CD8-positive, alpha-beta T cell (primary cell): ENCODE measurements at regions of chr12 and their contacts with region 1.

Region 1: GRCh38 chr12:116277393-116278278 is at the start of gene MED13L:
- DNase-seq: peak; percentile 78 to 95 (median 89)
- ATAC-seq: peak; percentile 80
- H3K4me3 ChIP-seq: peak within 1 kb of the TSS; percentile 83 to 85
- H3K4me3 Mint-ChIP-seq: peak within 1 kb of the TSS; percentile 93
- H3K27ac ChIP-seq: peak within 1 kb of the TSS; percentile 29 to 54
- H3K27ac Mint-ChIP-seq: peak within 1 kb of the TSS; percentile 91
- H3K4me1 ChIP-seq: peaks cover 34% of the 10 kb centered on the region
- H3K4me1 Mint-ChIP-seq: peaks cover 38% of the 10 kb centered on the region
- H3K27me3 ChIP-seq: no peaks in the 10 kb centered on the region
- H3K27me3 Mint-ChIP-seq: no peaks in the 10 kb centered on the region
- CTCF ChIP-seq: no peak
- total RNA-seq, gene MED13L: 157 to 159 TPM

Region 2: GRCh38 chr12:115172521-115172920 is 1105.1 kb before region 1 on chr12:
- CTCF ChIA-PET with region 1: no interaction called
- POLR2A ChIA-PET with region 1: no interaction called
- intact Hi-C with region 1: no loop called
- DNase-seq: no peak
- ATAC-seq: no peak
- H3K4me3 ChIP-seq: no peak overlapping the region
- H3K4me3 Mint-ChIP-seq: no peak overlapping the region
- H3K27ac ChIP-seq: no peak overlapping the region
- H3K27ac Mint-ChIP-seq: no peak overlapping the region
- H3K4me1 ChIP-seq: no peaks in the 10 kb centered on the region
- H3K4me1 Mint-ChIP-seq: no peaks in the 10 kb centered on the region
- H3K27me3 ChIP-seq: no peaks in the 10 kb centered on the region
- H3K27me3 Mint-ChIP-seq: peaks cover 2% of the 10 kb centered on the region
- CTCF ChIP-seq: no peak

Region 3: GRCh38 chr12:116236148-116236731 is 41.4 kb before region 1 on chr12:
- CTCF ChIA-PET with region 1: interaction called, 5 read pairs
- POLR2A ChIA-PET with region 1: interaction called, 4 read pairs
- intact Hi-C with region 1: loop called (anchors 1 to 5 kb)
- DNase-seq: peak in 8 of 9 experiments; percentile 26 to 78 (median 54)
- ATAC-seq: peak; percentile 73
- H3K4me3 ChIP-seq: no peak overlapping the region
- H3K4me3 Mint-ChIP-seq: peak overlapping the region; percentile 1
- H3K27ac ChIP-seq: peak overlapping the region in 1 of 2 experiments; percentile 18
- H3K27ac Mint-ChIP-seq: peak overlapping the region; percentile 83
- H3K4me1 ChIP-seq: peaks cover 10% of the 10 kb centered on the region
- H3K4me1 Mint-ChIP-seq: peaks cover 46% of the 10 kb centered on the region
- H3K27me3 ChIP-seq: no peaks in the 10 kb centered on the region
- H3K27me3 Mint-ChIP-seq: no peaks in the 10 kb centered on the region
- CTCF ChIP-seq: peak; percentile 52

Region 4: DNA sequence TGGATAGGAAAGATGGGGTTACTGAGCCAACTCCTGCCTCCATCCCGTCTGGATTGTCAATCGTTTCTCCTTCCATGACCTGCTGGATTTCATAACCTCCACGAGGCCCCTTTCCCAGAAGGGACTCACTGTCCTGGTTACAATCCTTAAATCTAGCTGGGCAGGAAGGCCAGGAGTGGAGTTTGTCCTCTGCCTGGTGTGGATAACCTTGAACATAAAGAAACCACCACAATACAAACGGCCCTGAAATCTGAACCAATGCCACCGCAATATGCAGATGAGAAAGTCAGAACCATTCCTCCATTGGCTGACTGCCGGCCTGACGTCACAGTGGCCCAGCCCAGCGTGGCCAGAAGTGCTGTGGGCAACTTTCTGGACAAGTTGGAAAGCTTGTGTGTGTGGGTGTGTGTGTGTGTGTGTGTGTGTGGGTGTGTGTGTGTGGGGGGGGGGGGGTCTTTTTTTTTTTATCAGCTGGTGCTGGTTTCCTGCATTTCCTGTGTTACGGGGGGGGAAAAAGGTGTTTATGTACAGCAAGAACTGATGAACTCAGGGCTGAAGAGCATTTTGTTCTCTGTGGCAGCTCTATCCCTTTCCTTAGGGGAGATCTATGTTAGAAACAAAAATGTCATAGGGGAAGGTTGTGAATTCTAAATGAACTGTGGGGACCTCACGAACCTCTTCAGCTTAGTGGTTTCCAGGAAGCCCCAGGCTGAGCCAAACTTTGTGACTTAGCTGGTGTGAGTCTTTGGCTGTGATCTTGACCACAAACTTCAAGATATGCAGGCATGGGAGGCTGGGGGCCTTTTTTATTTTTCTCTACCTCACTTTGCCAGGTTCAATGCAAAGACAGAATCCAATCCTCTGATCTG is 81.5 kb after region 1 on chr12:
- CTCF ChIA-PET with region 1: no interaction called
- POLR2A ChIA-PET with region 1: no interaction called
- intact Hi-C with region 1: loop called (anchors 1 to 5 kb)
- DNase-seq: peak; percentile 28 to 89 (median 71)
- ATAC-seq: peak; percentile 92
- H3K4me3 ChIP-seq: peak overlapping the region; percentile 10 to 41
- H3K4me3 Mint-ChIP-seq: peak overlapping the region; percentile 73
- H3K27ac ChIP-seq: peak overlapping the region in 1 of 2 experiments; percentile 57
- H3K27ac Mint-ChIP-seq: peak overlapping the region; percentile 84
- H3K4me1 ChIP-seq: peaks cover 26% of the 10 kb centered on the region
- H3K4me1 Mint-ChIP-seq: peaks cover 31% of the 10 kb centered on the region
- H3K27me3 ChIP-seq: no peaks in the 10 kb centered on the region
- H3K27me3 Mint-ChIP-seq: no peaks in the 10 kb centered on the region
- CTCF ChIP-seq: no peak

Region 5: DNA sequence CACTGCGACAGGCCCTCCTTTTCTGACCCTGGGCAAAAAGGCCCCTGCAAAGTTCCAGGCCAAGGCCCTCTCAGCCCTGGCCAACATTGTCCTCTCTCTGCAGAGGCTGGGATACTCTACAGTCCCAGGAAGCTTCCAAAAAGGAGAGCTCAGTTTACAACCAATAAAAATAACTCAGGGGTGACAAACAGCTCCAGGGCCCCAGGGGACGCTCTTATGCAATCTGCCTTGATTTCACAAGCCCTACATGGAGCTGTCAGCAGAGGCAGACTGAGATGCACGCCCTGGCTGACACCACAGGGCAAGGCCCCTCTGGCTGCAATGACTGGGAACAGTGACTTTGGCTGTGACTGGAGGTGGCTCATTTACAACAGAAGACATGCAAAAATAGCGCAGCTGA is 128.9 kb after region 1 on chr12:
- CTCF ChIA-PET with region 1: no interaction called
- POLR2A ChIA-PET with region 1: no interaction called
- intact Hi-C with region 1: no loop called
- DNase-seq: peak in 1 of 9 experiments; percentile 27
- ATAC-seq: no peak
- H3K4me3 ChIP-seq: no peak overlapping the region
- H3K4me3 Mint-ChIP-seq: no peak overlapping the region
- H3K27ac ChIP-seq: no peak overlapping the region
- H3K27ac Mint-ChIP-seq: no peak overlapping the region
- H3K4me1 ChIP-seq: no peaks in the 10 kb centered on the region
- H3K4me1 Mint-ChIP-seq: peaks cover 4% of the 10 kb centered on the region
- H3K27me3 ChIP-seq: no peaks in the 10 kb centered on the region
- H3K27me3 Mint-ChIP-seq: no peaks in the 10 kb centered on the region
- CTCF ChIP-seq: no peak

Region 6: GRCh38 chr12:116559162-116559935 is 281.7 kb after region 1 on chr12 and contains the start of gene MAP1LC3B2:
- CTCF ChIA-PET with region 1: no interaction called
- POLR2A ChIA-PET with region 1: interaction called, 7 read pairs
- intact Hi-C with region 1: loop called in 1 of 2 experiments (anchors 1 kb)
- DNase-seq: peak; percentile 47 to 92 (median 77)
- ATAC-seq: peak; percentile 80
- H3K4me3 ChIP-seq: peak within 1 kb of the TSS; percentile 40 to 47
- H3K4me3 Mint-ChIP-seq: peak within 1 kb of the TSS; percentile 69
- H3K27ac ChIP-seq: peak within 1 kb of the TSS; percentile 53 to 66
- H3K27ac Mint-ChIP-seq: peak within 1 kb of the TSS; percentile 94
- H3K4me1 ChIP-seq: peaks cover 29% of the 10 kb centered on the region
- H3K4me1 Mint-ChIP-seq: peaks cover 48% of the 10 kb centered on the region
- H3K27me3 ChIP-seq: no peaks in the 10 kb centered on the region
- H3K27me3 Mint-ChIP-seq: no peaks in the 10 kb centered on the region
- CTCF ChIP-seq: no peak
- total RNA-seq, gene MAP1LC3B2: 0.97 to 1.3 TPM

Region 7: DNA sequence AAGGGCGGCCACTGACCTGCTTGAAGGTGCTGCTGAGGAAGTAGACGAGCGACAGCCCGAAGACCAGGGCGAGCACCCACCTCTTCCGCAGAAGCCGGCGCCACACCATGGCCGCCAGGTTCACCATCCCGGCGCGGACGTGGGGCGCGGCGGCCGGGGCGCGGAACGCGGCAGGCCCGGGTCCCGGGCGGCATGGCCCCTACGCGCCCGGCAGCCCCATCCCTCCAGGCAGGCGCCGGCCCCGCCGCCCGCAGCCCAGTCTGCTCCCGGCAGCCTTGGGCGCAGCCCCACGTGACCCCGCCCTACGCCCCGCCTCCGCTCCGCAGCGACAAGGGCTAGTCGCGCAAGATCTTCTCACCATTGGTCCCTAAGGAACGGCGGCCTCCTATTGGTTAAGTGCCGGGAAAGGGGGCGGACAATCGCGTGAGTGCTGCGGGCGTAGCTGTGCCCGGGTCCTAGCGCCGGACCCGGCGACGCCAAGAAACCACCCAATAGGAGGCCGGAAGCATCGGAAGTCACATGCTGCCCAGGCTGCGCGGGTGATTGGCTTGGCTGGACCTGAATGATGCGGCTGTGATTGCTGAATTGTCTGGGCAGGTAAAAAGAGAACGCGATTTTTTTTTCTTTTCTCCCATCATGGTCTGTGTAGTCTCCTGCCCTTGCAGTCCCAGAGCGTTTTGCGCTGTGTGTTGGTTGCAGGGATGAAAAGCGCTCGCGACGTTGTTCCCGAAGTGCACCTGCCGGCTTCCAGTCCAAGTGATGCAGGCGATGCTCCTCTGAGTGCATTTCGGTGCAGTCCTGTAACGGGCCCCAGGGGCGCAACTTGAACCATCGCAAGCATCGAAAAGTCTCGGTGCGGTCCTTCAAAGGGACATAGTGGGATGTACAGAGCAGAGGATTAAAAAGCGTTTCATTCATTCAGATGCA is 460.4 kb after region 1 on chr12 and contains the starts of genes RNFT2 and SPRING1:
- CTCF ChIA-PET with region 1: no interaction called
- POLR2A ChIA-PET with region 1: no interaction called
- intact Hi-C with region 1: loop called in 1 of 2 experiments (anchors 1 kb)
- DNase-seq: peak; percentile 98 to 99 (median 99)
- ATAC-seq: peak; percentile 97
- H3K4me3 ChIP-seq: peak within 1 kb of the TSS; percentile 76 to 82
- H3K4me3 Mint-ChIP-seq: peak within 1 kb of the TSS; percentile 95
- H3K27ac ChIP-seq: peak within 1 kb of the TSS; percentile 55 to 61
- H3K27ac Mint-ChIP-seq: peak within 1 kb of the TSS; percentile 91
- H3K4me1 ChIP-seq: peaks cover 13% of the 10 kb centered on the region
- H3K4me1 Mint-ChIP-seq: peaks cover 39% of the 10 kb centered on the region
- H3K27me3 ChIP-seq: no peaks in the 10 kb centered on the region
- H3K27me3 Mint-ChIP-seq: no peaks in the 10 kb centered on the region
- CTCF ChIP-seq: no peak
- total RNA-seq, gene RNFT2: 3.8 to 4.1 TPM
- total RNA-seq, gene SPRING1: 14.1 to 14.4 TPM

Region 8: DNA sequence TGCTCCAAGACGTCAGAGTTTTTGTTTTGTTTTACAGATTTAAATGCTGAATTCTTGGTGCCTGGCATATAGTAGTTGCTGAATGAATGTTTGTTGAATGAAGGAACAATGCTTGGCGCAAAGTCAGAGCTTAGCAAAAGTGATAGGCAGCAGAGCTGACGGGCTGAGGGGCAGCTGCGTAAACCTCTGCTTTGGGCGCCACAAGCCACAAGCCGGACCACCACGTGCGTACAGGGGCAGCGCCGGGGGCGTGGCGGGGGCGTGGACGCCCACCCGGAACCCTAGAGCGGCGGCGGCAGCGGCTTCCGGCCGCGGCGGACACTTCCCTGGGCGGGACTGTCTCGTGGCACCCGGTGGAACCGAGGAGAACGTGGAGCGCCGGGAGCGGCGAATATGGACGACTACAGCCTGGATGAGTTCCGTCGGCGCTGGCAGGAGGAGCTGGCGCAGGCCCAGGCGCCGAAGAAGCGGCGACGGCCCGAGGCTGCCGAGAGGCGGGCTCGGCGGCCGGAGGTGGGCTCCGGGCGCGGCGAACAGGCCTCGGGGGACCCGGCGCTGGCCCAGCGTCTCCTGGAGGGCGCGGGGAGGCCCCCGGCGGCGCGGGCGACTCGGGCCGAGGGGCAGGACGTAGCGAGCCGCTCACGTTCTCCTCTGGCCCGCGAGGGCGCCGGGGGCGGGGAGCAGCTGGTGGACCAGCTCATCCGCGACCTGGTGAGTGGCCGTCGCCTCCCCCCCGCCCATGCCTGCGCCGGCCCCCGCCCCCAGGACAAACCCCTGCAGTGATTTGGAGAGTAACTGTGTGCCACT is 633.2 kb after region 1 on chr12 and contains the start of gene FBXW8:
- CTCF ChIA-PET with region 1: no interaction called
- POLR2A ChIA-PET with region 1: no interaction called
- intact Hi-C with region 1: loop called in 1 of 2 experiments (anchors 10 kb)
- DNase-seq: peak; percentile 17 to 79 (median 64)
- ATAC-seq: peak; percentile 75
- H3K4me3 ChIP-seq: peak within 1 kb of the TSS; percentile 52
- H3K4me3 Mint-ChIP-seq: peak within 1 kb of the TSS; percentile 87
- H3K27ac ChIP-seq: peak within 1 kb of the TSS in 1 of 2 experiments; percentile 43
- H3K27ac Mint-ChIP-seq: peak within 1 kb of the TSS; percentile 76
- H3K4me1 ChIP-seq: peaks cover 9% of the 10 kb centered on the region
- H3K4me1 Mint-ChIP-seq: peaks cover 35% of the 10 kb centered on the region
- H3K27me3 ChIP-seq: no peaks in the 10 kb centered on the region
- H3K27me3 Mint-ChIP-seq: peaks cover 2% of the 10 kb centered on the region
- CTCF ChIP-seq: no peak
- total RNA-seq, gene FBXW8: 5.6 to 6.5 TPM